HEK293T (cell line): ENCODE measurements at regions of chr3 and their contacts with region 1.

Region 1: GRCh38 chr3:34260271-34261006 is 462.0 kb downstream of the PDCD6IP start:
- DNase-seq: peak; percentile 45

Region 2: DNA sequence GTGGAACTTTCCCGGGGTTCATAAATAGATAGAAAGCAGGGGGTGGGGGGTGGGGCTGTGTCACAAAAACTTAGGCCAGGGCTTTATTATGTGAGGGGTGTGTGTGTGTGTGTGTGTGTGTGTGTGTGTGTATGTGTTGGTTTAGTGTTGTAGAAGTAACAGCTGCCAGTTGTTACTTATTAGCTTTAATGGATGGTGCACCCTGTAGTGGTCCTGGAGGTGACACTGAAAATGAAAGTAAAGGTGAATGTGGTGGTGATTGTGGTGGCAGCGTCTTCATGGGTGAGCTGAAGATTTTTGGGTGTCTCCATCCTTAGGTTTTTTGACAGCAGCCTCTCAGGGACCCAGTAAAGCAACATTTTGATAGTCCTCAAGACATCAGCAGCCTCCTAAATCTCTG is 12.1 kb before region 1 on chr3:
- CTCF ChIA-PET with region 1: interaction called, 10 read pairs
- POLR2A ChIA-PET with region 1: no interaction called
- DNase-seq: no peak

Region 3: GRCh38 chr3:34683851-34684250 is 423.4 kb after region 1 on chr3:
- CTCF ChIA-PET with region 1: interaction called, 13 read pairs
- POLR2A ChIA-PET with region 1: no interaction called
- DNase-seq: peak; percentile 12